ENCODE measurements at regions of chr1 and their contacts with region 1.

Region 1: GRCh38 chr1:27662707-27663393 is 9.1 kb downstream of the IFI6 start:
- DNase-seq: peak; percentile 62 to 94 (median 84)
- H3K4me3 ChIP-seq: peak overlapping the region in 1 of 59 donors; percentile 10
- H3K27ac ChIP-seq: peak overlapping the region in 36 of 59 donors; percentile 4 to 76 (median 53)
- H3K27me3 ChIP-seq: no peaks in the 10 kb centered on the region
- CTCF ChIP-seq: peak; percentile 83 to 98 (median 94)

Region 2: DNA sequence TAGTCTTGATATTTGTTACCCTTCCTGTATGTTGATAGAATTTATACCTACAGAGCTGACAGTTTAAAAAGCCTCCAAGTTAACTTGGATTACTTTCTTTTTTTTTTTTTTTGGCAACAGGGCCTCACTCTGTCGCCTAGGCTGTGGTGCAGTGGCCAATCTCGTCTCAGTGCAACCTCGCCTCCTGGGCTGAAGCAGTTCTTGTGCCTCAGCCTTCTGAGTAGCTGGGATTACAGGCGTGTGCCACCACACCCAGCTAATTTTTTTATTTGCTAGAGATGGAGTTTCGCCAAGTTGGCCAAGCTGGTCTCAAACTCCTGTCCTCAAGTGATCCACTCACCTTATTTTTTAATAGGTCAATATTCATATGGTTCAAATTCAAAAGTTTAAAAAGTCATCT is 395.7 kb before region 1 on chr1:
- intact Hi-C with region 1: no loop called
- DNase-seq: no peak
- H3K4me3 ChIP-seq: no peak overlapping the region
- H3K27ac ChIP-seq: no peak overlapping the region
- H3K27me3 ChIP-seq: no peaks in the 10 kb centered on the region
- CTCF ChIP-seq: no peak

Region 3: GRCh38 chr1:27300341-27301051 is 362.4 kb before region 1 on chr1:
- intact Hi-C with region 1: loop called in 1 of 2 experiments (anchors 2 kb)
- DNase-seq: peak; percentile 71 to 91 (median 86)
- H3K4me3 ChIP-seq: no peak overlapping the region
- H3K27ac ChIP-seq: peak overlapping the region in 58 of 59 donors; percentile 27 to 97 (median 85)
- H3K27me3 ChIP-seq: no peaks in the 10 kb centered on the region
- CTCF ChIP-seq: peak; percentile 83 to 100 (median 99)

Region 4: DNA sequence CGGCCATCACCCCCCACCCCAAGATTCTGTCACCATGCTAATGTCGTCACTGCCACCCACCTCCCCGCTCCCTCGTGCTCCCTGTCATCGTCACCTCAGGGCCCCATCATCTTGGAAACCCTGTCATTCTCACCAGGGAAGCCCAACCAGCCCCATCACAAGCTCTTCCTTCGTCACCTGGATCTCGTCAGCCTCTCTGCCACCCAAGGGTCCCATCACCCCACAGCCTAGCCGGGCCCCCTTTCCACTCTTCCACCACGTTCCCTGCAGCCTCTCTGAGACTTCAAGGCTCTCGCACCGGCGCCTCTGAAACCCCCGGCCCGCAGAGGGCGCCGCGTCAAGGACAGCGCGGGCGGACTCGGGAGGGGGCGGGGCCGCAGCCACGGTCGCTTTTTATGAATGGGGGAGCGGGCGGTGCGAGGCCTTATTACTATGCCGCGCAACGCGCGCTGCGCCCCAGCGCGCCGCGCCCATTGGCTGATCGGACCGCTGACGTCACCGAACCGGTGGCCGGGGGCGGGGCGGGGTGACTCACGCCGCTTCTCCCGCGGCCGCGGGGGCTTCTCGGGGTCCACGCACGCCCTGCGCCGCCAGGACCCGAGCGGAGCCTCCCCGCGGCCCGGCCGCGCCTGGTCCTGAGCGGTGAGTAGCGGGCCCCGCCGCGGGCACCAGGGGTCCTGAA is 270.6 kb before region 1 on chr1 and contains the start of gene GPR3:
- intact Hi-C with region 1: loop called (anchors 5 to 10 kb)
- DNase-seq: peak; percentile 81 to 93 (median 90)
- H3K4me3 ChIP-seq: peak within 1 kb of the TSS; percentile 41 to 82 (median 68)
- H3K27ac ChIP-seq: peak within 1 kb of the TSS in 48 of 59 donors; percentile 21 to 92 (median 66)
- H3K27me3 ChIP-seq: no peaks in the 10 kb centered on the region
- CTCF ChIP-seq: peak; percentile 15 to 77 (median 64)
- total RNA-seq, gene GPR3: 0.29 to 10.1 (median 2.2) TPM

Region 5: DNA sequence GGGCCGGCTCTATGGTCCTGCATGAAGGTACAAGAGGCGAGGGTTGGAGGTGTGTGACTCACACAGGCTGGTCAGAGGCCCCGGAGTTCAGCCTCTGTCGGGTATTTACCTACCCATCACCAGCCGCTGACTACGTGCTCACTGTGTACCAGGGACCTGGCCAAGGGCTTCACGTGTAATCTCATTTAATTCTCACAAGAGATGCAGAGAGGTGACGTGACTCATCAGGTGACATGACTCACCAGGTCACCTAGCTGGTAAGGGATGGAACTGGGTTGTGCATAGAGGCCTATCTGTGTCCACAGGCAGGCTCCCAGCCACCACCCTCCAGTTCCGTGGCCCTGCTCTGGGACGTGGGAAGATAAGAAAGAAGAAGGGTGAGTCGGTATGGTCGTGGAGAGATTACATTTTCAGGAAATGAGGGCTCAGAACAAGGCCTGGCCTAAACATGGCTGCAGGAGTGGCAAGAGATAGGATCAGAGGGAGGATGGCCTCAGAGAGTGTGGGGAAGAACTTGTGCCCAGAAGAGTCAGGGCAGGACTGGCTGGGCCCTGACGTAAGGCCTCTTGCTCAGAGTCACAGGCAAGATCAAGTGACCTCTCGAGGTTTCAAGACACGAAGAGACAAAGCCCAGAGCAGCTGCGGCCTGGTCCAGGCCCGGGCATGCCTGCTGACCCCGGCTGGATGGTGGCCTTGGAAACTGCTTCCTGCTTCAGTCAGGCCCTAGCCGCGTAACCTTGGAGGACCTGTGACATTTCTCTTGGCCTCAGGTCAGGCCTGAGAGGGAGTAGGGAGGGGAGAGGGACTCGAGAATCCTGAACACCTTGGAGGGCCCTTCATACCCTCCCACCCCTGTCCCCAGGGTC is 120.2 kb before region 1 on chr1:
- intact Hi-C with region 1: loop called in 1 of 2 experiments (anchors 10 kb)
- DNase-seq: no peak
- H3K4me3 ChIP-seq: no peak overlapping the region
- H3K27ac ChIP-seq: peak overlapping the region in 54 of 59 donors; percentile 2 to 84 (median 65)
- H3K27me3 ChIP-seq: no peaks in the 10 kb centered on the region
- CTCF ChIP-seq: no peak

Region 6: GRCh38 chr1:27556781-27557595 is 105.9 kb before region 1 on chr1:
- intact Hi-C with region 1: loop called in 1 of 2 experiments (anchors 5 kb)
- DNase-seq: peak in 9 of 10 donors; percentile 45 to 79 (median 72)
- H3K4me3 ChIP-seq: peak overlapping the region in 12 of 59 donors; percentile 2 to 27 (median 19)
- H3K27ac ChIP-seq: peak overlapping the region in 53 of 59 donors; percentile 20 to 91 (median 66)
- H3K27me3 ChIP-seq: no peaks in the 10 kb centered on the region
- CTCF ChIP-seq: peak; percentile 67 to 99 (median 94)

Region 7: GRCh38 chr1:27609618-27610240 is 53.1 kb before region 1 on chr1:
- intact Hi-C with region 1: loop called (anchors 1 kb)
- DNase-seq: no peak
- H3K4me3 ChIP-seq: no peak overlapping the region
- H3K27ac ChIP-seq: no peak overlapping the region
- H3K27me3 ChIP-seq: peaks cover 0 to 7% (median 0%) of the 10 kb centered on the region in 45 donors
- CTCF ChIP-seq: no peak